SK-N-SH (cell line): ENCODE measurements at regions of chr14 and their contacts with region 1.

Region 1: GRCh38 chr14:66359500-66359899 is 126.7 kb upstream of the CCDC196 start:
- DNase-seq: peak; percentile 45
- H3K4me3 ChIP-seq: no peak overlapping the region; a peak in 1 of 4 replicates
- H3K27ac ChIP-seq: no peak overlapping the region
- H3K4me1 ChIP-seq: peaks cover 0 to 2% of the 10 kb centered on the region in 2 experiments; a peak in 1 of 4 replicates
- H3K27me3 ChIP-seq: no peaks in the 10 kb centered on the region
- CTCF ChIP-seq: peak; percentile 76
- EP300 ChIP-seq: no peak
- RAD21 ChIP-seq: peak; percentile 89

Region 2: DNA sequence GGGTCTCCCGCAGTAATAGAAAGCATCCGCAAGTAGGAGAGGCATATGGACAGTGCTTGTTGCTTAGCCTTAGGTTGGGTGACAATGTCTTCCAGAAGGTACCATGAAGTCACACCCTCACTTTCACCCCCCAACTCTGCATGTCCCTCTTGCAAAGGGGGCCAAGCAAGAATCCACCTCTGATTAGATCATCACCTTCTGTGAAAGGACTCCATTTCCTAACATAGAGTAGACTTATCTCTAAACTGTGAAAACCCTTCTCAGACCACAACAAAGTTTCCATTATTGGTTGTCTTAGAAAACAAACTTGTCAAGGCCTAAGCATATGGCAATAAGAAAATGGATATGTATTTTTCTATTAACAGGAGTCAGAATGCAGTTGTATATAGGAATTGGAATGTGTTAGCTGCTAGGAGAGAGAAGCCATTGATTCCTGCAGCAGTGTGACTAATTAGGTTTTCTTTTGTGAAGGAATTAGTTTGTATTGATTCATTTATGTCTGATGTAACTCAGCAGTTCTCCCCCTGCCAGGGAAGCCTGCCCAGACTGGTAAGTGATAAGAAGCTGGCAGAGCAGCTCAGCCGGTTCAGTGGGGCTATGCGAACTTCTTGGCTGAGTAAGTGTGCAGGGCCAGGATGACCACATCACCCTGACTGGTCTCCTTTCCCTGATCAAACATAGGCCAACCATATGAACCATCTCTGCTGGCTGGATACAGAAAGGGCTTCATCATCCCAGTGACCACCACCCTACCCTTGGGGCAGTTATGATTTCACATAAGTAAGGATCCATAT is 19.4 kb after region 1 on chr14:
- CTCF ChIA-PET with region 1: interaction called, 12 read pairs
- POLR2A ChIA-PET with region 1: no interaction called
- DNase-seq: no peak
- H3K4me3 ChIP-seq: no peak overlapping the region
- H3K27ac ChIP-seq: no peak overlapping the region
- H3K4me1 ChIP-seq: peaks cover 0 to 7% of the 10 kb centered on the region in 2 experiments; a peak in 1 of 4 replicates
- H3K27me3 ChIP-seq: no peaks in the 10 kb centered on the region
- CTCF ChIP-seq: no peak
- EP300 ChIP-seq: no peak
- RAD21 ChIP-seq: no peak

Region 3: GRCh38 chr14:66445936-66446335 is 86.4 kb after region 1 on chr14:
- CTCF ChIA-PET with region 1: no interaction called
- POLR2A ChIA-PET with region 1: no interaction called
- DNase-seq: no peak
- H3K4me3 ChIP-seq: no peak overlapping the region
- H3K27ac ChIP-seq: no peak overlapping the region
- H3K4me1 ChIP-seq: peaks cover 0 to 3% of the 10 kb centered on the region in 2 experiments; a peak in 1 of 4 replicates
- H3K27me3 ChIP-seq: no peaks in the 10 kb centered on the region
- CTCF ChIP-seq: no peak
- EP300 ChIP-seq: no peak
- RAD21 ChIP-seq: no peak

Region 4: DNA sequence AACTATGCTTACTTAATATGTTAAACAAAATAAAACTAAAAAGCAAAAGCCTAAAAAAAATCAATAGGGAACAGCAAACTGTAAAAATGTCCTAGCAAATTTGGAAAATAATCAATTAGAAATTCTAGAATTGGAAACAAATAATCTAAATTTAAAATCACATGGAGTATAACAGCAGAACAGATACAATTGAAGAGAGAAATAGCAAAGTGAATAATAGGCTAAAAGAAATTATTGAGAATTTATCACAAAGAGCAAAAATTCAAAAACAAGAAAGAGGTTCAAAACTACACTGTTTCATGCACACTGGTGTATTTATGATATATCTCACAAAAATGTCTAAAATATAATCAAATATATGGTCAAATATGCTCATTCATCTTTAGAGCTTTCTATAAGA is 380.3 kb after region 1 on chr14:
- CTCF ChIA-PET with region 1: no interaction called
- POLR2A ChIA-PET with region 1: no interaction called
- DNase-seq: no peak
- H3K4me3 ChIP-seq: no peak overlapping the region
- H3K27ac ChIP-seq: no peak overlapping the region
- H3K4me1 ChIP-seq: no peaks in the 10 kb centered on the region
- H3K27me3 ChIP-seq: no peaks in the 10 kb centered on the region
- CTCF ChIP-seq: no peak
- EP300 ChIP-seq: no peak
- RAD21 ChIP-seq: no peak